Right cardiac atrium (tissue), 5 donors: ENCODE measurements at regions of chr11 and their contacts with region 1.

Region 1: DNA sequence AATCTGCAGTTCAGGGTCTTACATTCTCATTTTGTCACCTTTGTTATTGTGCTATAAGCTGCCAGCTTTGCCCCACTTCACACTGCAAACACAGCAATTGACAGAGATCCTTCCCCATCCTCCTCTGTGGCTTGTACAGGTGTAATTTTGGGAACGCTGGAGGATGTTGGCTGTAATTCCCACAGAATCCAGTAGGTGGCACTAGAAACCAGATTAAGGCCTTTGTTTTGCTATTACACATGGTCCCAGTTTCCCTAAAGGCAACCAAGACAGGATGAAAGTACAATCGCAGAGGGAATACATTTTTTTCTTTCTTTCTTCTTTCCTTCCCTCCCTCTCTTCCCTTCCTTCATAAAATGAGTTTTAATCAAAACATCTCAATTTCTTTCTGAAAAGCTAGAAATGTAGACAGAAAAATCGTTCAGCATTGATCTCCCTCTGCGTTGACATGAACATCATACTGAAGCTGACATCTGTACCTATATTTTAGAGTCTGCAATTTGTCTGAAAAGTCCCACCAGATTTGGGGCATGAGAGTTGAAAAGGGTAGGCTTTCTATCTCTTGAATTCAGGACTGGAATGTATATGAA is 21.3 kb upstream of the NELL1 start:
- DNase-seq: no peak
- ATAC-seq: peak; percentile 31 to 42
- H3K4me3 ChIP-seq: no peak overlapping the region
- H3K27ac ChIP-seq: no peak overlapping the region
- H3K4me1 ChIP-seq: no peaks in the 10 kb centered on the region
- H3K27me3 ChIP-seq: no peaks in the 10 kb centered on the region

Region 2: DNA sequence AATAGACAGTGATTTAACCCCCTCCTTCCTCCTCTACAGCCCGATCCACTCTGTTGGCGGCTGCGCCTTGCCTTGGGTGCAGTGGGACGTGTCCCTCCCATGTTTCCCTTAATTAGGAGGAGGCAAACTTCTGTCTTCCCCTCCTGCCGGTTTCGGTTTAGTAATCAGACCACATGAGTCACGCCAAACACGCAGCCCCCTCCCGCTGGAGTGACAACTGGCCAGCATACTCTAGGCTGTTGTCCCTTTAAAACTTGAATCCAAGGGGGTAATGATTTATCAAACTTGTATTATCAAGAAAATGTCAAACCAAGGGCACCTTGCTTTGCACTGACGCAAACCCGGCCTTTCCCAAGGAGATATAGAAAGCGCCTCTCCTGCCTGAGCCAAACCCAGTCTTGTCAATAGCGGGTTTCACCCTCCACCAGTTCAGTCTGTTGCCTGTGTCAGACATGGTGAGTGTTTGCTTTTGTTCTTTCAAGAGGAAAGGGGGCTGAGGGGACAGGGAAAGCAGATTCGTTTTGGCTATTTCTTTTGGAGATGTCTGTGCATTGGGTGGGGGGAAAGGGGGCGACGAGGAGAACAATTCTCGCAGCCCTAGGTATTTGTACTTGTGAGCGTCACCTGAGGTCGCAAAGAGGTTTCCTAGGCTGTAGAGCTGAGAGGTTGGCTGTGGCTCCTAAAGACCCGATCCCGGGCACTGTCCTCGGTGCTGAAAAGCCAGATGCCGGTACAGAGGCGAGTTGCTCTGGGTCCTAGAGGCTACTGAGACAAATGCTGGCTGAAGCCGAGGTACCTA is 48.7 kb before region 1 on chr11 and contains the start of gene SLC6A5:
- intact Hi-C with region 1: no loop called
- DNase-seq: peak; percentile 50 to 78 (median 69)
- ATAC-seq: peak in 1 of 2 donors; percentile 39
- H3K4me3 ChIP-seq: no peak within 1 kb of the TSS
- H3K27ac ChIP-seq: no peak within 1 kb of the TSS
- H3K4me1 ChIP-seq: no peaks in the 10 kb centered on the region
- H3K27me3 ChIP-seq: no peaks in the 10 kb centered on the region
- total RNA-seq, gene SLC6A5: not detected

Region 3: DNA sequence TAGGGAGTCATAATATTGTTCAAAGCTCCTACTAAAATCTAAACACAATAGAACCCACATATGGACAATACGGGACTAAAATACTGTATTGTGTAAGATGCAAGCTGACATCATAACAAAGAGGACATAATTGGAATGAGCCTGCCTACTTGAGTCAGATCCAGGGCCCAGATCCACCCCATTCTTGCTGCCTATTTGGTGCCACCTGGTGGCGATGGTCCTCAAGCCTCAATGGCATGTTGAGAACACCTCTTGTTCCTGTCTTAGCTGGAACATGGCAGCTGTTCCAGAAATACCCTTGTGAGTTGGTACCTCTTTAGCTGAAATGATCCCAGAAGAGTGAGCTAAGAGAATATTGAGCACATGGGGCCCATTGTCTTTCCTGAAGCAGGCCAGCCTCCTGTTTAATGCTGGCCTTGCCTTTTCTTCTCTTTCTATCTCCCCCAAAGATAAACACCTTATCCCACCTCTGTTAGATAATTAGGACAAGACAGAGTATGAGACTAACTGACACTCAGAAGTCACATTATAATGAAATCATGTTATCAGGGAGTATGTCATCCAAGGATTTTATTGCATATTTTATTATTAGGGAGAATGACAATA is 863.9 kb after region 1 on chr11:
- intact Hi-C with region 1: loop called in 1 of 4 experiments (anchors 10 kb)
- DNase-seq: peak; percentile 38 to 65 (median 46)
- ATAC-seq: no peak
- H3K4me3 ChIP-seq: no peak overlapping the region
- H3K27ac ChIP-seq: no peak overlapping the region
- H3K4me1 ChIP-seq: no peaks in the 10 kb centered on the region
- H3K27me3 ChIP-seq: no peaks in the 10 kb centered on the region

Region 4: DNA sequence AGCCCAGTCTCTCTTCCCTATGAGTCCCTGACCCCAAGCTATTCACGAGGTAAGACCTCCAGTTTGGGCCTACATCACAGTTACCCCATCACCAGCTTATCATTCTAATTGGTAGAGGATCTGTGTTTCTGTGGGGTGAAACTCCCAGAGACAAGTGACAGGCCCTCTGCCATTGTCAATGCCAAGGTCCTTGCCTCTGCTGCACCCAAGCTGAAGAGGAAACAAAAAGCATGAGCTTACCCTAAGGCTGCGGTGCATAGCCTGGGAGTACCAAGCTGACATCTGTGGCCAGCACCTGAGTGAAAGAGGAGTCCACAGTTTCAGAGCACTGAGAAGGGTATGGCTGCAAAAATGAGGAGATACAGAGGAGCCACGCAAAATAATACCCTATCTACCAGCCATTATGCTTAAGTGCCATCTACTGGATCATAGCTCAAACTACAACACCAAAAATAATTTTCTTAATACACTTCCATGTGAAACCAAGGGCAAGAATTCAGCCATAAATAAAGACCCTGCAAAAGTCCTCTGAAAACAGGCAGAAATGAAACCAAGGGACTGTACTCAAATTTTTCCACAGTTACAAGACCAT is 1482.5 kb after region 1 on chr11:
- intact Hi-C with region 1: loop called in 1 of 4 experiments (anchors 5 kb)
- DNase-seq: no peak
- ATAC-seq: peak in 1 of 2 donors; percentile 31
- H3K4me3 ChIP-seq: no peak overlapping the region
- H3K27ac ChIP-seq: no peak overlapping the region
- H3K4me1 ChIP-seq: no peaks in the 10 kb centered on the region
- H3K27me3 ChIP-seq: no peaks in the 10 kb centered on the region

Region 5: DNA sequence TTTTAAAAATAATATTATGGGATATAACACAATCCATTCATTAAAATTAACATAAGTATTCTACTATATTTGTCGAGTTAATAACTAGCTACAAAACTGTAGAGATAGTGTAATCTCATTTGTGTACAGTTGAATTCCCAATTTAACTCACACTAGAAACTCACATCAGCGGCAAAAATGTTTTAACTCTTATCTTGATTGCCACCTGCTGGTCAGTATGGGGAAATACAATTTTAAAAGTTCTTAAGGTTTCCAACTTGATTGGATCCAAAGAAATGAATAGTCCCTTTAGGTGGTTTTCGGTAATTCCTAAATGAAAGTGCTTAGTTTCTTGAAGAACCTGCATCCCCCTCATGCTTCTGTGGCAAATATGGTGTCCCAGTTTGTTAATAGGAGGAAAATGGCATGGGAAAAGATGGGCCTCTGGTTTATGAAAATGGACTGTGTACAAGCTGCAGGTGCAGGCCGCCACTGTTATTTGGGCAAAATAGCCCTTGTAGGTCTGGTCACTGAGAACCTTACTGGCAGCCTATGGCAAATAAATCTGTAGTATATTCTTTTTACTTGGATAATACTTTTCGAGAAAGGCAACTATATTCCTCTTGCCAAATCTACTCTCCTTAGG is 1656.4 kb after region 1 on chr11:
- intact Hi-C with region 1: loop called in 1 of 4 experiments (anchors 10 kb)
- DNase-seq: no peak
- ATAC-seq: no peak
- H3K4me3 ChIP-seq: no peak overlapping the region
- H3K27ac ChIP-seq: no peak overlapping the region
- H3K4me1 ChIP-seq: no peaks in the 10 kb centered on the region
- H3K27me3 ChIP-seq: no peaks in the 10 kb centered on the region